H1 (cell line): ENCODE measurements at regions of chr9 and their contacts with region 1.

Region 1: DNA sequence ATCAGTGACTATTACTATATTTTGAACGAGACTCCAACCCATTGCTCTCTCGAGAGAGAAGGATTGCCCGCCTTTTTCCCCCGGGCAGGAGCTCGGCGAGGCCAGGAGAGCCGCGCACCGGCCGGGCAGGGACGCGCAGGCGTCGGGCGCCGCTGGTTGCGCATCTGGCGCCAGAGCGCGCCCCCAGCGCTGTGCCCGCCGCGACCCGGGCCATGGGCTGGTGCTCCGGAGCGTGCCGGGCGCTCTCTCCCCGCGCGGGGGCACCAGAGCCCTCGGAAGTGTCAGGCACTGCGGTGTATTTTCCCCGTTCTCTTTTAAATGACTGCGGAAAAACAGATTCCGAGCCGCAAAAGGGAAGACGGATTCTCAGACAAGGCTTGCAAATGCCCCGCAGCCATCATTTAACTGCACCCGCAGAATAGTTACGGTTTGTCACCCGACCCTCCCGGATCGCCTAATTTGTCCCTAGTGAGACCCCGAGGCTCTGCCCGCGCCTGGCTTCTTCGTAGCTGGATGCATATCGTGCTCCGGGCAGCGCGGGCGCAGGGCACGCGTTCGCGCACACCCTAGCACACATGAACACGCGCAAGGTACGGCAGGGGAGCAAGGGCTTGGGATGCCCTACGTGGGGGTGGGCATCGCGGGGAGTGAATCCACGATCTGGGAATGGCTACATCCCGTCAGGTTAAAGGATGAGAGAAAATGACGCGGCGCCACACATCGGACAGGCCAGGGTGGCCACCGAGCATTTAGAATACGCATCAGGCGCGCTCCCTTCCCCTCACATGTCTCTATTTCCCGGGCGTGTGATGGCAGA is 1.1 kb upstream of the NTRK2 start:
- DNase-seq: peak; percentile 44 to 89
- H3K4me3 ChIP-seq: peak overlapping the region; percentile 37 to 64 (median 58)
- H3K27ac ChIP-seq: no peak overlapping the region
- H3K4me1 ChIP-seq: peaks cover 0 to 12% (median 9%) of the 10 kb centered on the region in 4 experiments; a peak in 6 of 7 replicates
- H3K27me3 ChIP-seq: peaks cover 30 to 57% (median 53%) of the 10 kb centered on the region in 4 experiments
- CTCF ChIP-seq: peak; percentile 71 to 90 (median 72)
- EP300 ChIP-seq: no peak
- POLR2A ChIP-seq: no peak
- RAD21 ChIP-seq: peak; percentile 66 to 84

Region 2: DNA sequence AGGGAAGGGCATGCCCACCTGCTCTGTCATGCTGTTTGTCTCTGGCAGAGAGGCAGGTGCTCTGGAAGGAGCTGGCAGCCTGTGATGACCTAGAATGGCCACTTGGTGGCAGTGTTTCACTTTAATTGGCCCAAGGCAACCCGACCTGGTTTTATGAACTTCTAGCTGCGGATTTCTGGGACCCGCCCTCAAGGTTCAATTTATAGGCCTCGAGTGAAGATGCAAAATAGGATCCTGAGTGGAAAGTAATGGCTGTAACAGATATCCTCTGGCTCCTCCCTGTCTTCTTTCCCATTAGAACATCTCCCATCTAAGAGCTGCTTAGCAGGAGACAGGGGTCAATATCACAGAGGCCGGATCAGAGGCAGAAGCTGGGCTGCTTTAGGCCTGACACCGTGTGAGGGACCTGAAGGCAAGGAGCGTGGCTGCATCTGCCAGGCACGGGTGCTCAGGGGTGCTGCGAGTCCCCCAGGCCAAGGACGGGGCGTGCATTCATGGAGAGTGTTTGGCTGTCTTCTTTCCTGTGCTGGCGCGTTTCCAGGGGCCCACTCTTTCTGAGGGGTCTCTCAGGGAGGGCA is 271.2 kb before region 1 on chr9:
- CTCF ChIA-PET with region 1: interaction called, 29 read pairs
- POLR2A ChIA-PET with region 1: no interaction called
- DNase-seq: peak; percentile 31 to 81
- H3K4me3 ChIP-seq: no peak overlapping the region
- H3K27ac ChIP-seq: no peak overlapping the region
- H3K4me1 ChIP-seq: no peaks in the 10 kb centered on the region
- H3K27me3 ChIP-seq: no peaks in the 10 kb centered on the region
- CTCF ChIP-seq: peak; percentile 74 to 84 (median 77)
- EP300 ChIP-seq: no peak
- POLR2A ChIP-seq: no peak
- RAD21 ChIP-seq: peak; percentile 92 to 95

Region 3: DNA sequence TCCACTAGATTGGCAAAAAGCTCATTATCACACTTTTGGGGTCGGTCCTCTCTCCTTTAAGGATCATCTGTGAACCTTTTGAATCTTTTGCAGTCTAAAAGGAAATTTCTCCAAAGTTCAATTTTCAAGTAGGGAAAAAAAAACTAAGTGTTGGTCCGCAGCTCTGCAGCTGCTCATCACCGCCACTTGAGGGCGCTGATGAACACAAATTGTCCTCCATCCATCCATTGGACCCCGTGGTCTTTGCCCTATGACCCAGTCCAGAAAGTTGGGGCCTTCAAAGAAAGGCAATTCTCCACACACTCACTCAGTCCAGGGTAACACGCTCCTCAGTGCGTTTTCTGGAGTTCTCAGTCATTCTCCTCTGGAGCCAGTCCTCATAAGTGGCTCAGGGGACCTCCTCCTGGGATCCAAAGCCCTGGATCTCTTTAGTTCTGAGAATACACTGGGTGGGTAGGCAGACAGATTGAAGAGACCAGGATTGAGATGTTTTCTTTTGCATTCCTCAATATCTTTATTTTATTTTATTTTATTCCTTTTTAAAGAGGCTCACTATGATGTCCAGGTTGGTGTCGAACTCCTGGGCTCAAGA is 264.2 kb before region 1 on chr9:
- CTCF ChIA-PET with region 1: interaction called, 29 read pairs
- POLR2A ChIA-PET with region 1: no interaction called
- DNase-seq: peak in 1 of 2 experiments; percentile 52
- H3K4me3 ChIP-seq: no peak overlapping the region
- H3K27ac ChIP-seq: no peak overlapping the region
- H3K4me1 ChIP-seq: no peaks in the 10 kb centered on the region
- H3K27me3 ChIP-seq: no peaks in the 10 kb centered on the region
- CTCF ChIP-seq: peak; percentile 72 to 80 (median 76)
- EP300 ChIP-seq: no peak
- POLR2A ChIP-seq: no peak
- RAD21 ChIP-seq: peak; percentile 83 to 84

Region 4: DNA sequence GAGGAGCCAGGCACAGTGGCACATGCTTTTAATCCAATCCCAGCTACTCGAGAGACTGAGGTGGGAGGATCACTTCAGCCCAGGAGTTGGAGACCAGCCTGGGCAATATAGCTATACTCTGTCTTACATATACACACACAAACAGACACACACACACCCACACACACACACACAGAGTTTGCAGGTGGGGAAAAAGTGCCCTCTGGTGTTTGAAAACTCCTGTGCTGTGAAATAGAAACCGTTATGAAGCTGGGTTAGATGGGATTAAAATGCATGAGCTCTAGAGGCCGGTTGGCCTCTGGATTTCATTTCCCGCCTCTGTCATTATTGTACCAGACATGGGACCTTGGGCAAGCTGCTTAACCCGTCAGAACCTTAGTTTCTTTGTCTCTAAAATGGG is 206.9 kb before region 1 on chr9:
- CTCF ChIA-PET with region 1: no interaction called
- POLR2A ChIA-PET with region 1: no interaction called
- DNase-seq: no peak
- H3K4me3 ChIP-seq: no peak overlapping the region
- H3K27ac ChIP-seq: no peak overlapping the region
- H3K4me1 ChIP-seq: no peaks in the 10 kb centered on the region
- H3K27me3 ChIP-seq: no peaks in the 10 kb centered on the region; a peak in 1 of 7 replicates
- CTCF ChIP-seq: no peak
- EP300 ChIP-seq: no peak
- POLR2A ChIP-seq: no peak
- RAD21 ChIP-seq: no peak; a peak in 1 of 4 replicates

Region 5: DNA sequence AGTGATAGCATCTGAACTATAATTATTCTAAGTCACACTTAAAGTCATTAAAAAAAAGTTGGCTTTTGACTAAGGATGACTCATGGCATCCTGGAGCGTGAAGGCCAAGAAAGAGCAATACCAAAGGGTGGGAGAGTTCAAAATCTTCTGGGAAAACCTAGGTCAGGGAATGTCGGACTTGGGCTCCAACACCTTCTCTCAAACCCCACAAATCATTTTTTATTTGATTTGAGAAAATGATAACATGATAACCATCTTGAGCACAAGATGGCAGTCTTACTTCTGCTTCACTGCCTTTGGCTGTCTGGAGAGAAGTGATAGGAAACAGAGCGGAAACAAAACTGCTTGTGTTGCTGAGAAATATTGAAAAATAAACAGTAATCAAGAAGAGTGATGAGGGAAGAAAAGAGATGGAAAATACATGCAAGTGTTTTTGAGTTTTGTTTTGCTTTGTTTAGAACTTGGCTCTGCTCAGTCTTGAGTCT is 15.8 kb before region 1 on chr9:
- CTCF ChIA-PET with region 1: interaction called, 11 read pairs
- POLR2A ChIA-PET with region 1: no interaction called
- DNase-seq: no peak
- H3K4me3 ChIP-seq: no peak overlapping the region
- H3K27ac ChIP-seq: no peak overlapping the region
- H3K4me1 ChIP-seq: no peaks in the 10 kb centered on the region
- H3K27me3 ChIP-seq: no peaks in the 10 kb centered on the region
- CTCF ChIP-seq: no peak
- EP300 ChIP-seq: no peak
- POLR2A ChIP-seq: no peak
- RAD21 ChIP-seq: peak; percentile 7 to 37; a peak in 3 of 4 replicates

Region 6: DNA sequence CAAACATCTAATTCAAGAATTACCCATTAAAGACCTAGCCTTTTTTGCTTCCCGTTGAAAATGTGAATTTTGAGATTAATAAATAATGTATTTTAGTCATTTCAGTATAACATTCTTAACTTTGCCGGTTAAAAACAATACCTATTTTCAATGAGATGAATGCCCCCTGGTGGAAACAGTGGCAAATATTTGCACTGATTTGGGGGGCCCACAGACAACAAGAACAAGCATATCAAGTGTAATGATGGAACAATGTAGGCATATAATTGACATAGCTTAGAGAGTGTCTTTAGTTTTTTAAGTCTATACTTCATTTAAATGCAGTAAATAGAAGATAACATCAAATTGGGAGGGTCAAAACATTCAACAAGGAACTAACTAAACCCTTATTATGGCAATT is 113.1 kb after region 1 on chr9:
- CTCF ChIA-PET with region 1: interaction called, 12 read pairs
- POLR2A ChIA-PET with region 1: no interaction called
- DNase-seq: no peak
- H3K4me3 ChIP-seq: no peak overlapping the region
- H3K27ac ChIP-seq: no peak overlapping the region
- H3K4me1 ChIP-seq: no peaks in the 10 kb centered on the region
- H3K27me3 ChIP-seq: no peaks in the 10 kb centered on the region
- CTCF ChIP-seq: peak in 2 of 3 experiments; percentile 49 to 51; a peak in 2 of 4 replicates
- EP300 ChIP-seq: no peak
- POLR2A ChIP-seq: no peak
- RAD21 ChIP-seq: peak; percentile 64 to 69